MCF 10A (cell line): ENCODE measurements at regions of chr4 and their contacts with region 1.

Region 1: GRCh38 chr4:781493-782216 is 44.3 kb downstream of the CPLX1 start:
- DNase-seq: peak; percentile 99
- H3K4me3 Mint-ChIP-seq: peak overlapping the region; percentile 81
- H3K27ac Mint-ChIP-seq: peak overlapping the region; percentile 94
- H3K4me1 Mint-ChIP-seq: peaks cover 19% of the 10 kb centered on the region
- H3K27me3 Mint-ChIP-seq: no peaks in the 10 kb centered on the region
- CTCF ChIP-seq: no peak

Region 2: GRCh38 chr4:766152-766515 is 15.5 kb before region 1 on chr4:
- CTCF ChIA-PET with region 1: interaction called, 3 read pairs
- POLR2A ChIA-PET with region 1: interaction called, 68 read pairs
- intact Hi-C with region 1: no loop called
- DNase-seq: peak; percentile 81
- H3K4me3 Mint-ChIP-seq: no peak overlapping the region
- H3K27ac Mint-ChIP-seq: peak overlapping the region; percentile 49
- H3K4me1 Mint-ChIP-seq: peaks cover 18% of the 10 kb centered on the region
- H3K27me3 Mint-ChIP-seq: no peaks in the 10 kb centered on the region
- CTCF ChIP-seq: no peak

Region 3: GRCh38 chr4:1802151-1802715 is 1020.6 kb after region 1 on chr4:
- CTCF ChIA-PET with region 1: no interaction called
- POLR2A ChIA-PET with region 1: no interaction called
- intact Hi-C with region 1: no loop called
- DNase-seq: no peak
- H3K4me3 Mint-ChIP-seq: no peak overlapping the region
- H3K27ac Mint-ChIP-seq: no peak overlapping the region
- H3K4me1 Mint-ChIP-seq: no peaks in the 10 kb centered on the region
- H3K27me3 Mint-ChIP-seq: no peaks in the 10 kb centered on the region
- CTCF ChIP-seq: no peak

Region 4: DNA sequence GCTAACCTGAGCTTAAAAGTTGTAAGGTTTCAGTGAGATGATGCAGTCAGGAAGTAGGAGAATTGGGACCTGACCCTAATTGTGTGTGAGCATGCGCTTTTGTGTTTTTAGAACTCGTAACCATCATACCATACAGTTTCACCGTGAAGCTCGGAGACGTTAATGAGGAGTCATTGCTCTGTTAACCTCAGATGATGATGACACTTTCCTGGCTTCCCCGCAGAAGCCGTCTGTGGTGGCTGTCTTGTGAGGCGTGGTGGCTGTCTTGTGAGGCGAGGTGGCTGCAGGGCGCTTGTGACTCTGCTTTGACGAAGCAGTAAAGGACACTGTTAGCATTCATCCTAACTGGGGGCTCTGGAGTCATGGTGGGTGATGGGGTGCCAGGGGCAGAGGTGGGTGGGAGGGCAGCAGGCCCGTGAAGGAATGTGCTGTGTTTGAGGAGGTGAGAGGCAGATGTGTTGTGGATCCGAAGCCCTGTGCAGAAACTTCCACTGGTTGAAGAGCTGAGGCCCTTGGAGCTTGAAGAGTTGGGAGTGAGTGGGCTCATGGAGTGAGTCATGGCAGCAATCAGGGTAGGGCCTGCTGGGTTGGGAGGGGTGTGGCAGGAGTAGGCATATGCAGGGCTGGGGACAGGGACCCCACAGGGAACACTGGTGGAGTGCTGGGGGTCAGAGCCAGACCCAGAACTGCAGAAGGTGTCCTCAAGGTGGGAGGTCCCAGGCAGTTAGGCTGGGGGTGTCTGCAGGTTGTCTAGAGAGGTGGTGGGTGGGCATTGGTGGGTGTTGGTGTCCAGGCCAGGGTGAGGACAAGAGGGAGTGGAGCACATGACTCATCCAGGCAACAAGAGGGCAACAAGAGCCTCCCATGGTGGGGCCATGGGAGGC is 1146.9 kb after region 1 on chr4:
- CTCF ChIA-PET with region 1: no interaction called
- POLR2A ChIA-PET with region 1: no interaction called
- intact Hi-C with region 1: no loop called
- DNase-seq: no peak
- H3K4me3 Mint-ChIP-seq: no peak overlapping the region
- H3K27ac Mint-ChIP-seq: peak overlapping the region; percentile 62
- H3K4me1 Mint-ChIP-seq: peaks cover 9% of the 10 kb centered on the region
- H3K27me3 Mint-ChIP-seq: no peaks in the 10 kb centered on the region
- CTCF ChIP-seq: no peak